Mammary epithelial cell (primary cell): ENCODE measurements at regions of chr2 and their contacts with region 1.

Region 1: DNA sequence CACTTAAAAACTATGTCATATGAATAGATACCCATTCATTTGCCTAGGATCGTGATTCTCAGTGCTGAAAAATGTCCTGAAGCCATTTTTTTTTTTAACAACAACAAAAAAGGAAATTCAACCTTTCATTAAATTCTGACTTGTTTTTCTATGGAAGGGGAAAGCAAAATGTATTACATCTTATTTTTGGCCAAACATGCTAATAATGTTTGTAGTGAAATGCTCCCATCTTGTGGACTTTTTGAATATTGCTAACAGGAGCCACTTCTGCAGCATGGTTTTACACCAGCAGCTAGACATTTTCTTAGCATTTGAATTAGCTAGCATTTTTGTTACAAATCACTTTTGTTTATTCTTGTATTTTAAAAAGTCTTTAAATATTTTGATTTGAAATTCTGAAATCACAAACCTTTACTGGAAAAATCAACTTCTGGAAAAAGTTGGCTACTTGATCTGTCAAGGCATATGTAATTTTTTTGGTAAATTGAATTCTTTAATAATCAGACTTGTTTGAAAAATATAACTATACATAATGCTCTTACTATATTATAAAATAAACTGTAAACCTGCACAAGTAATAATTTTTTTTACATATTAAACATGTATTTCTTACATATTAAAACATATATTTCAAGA is 75.8 kb downstream of the KIDINS220 start:
- DNase-seq: peak; percentile 7
- H3K4me3 ChIP-seq: no peak overlapping the region
- H3K27ac ChIP-seq: no peak overlapping the region
- H3K4me1 ChIP-seq: no peaks in the 10 kb centered on the region
- H3K27me3 ChIP-seq: no peaks in the 10 kb centered on the region
- CTCF ChIP-seq: peak; percentile 44 to 53

Region 2: DNA sequence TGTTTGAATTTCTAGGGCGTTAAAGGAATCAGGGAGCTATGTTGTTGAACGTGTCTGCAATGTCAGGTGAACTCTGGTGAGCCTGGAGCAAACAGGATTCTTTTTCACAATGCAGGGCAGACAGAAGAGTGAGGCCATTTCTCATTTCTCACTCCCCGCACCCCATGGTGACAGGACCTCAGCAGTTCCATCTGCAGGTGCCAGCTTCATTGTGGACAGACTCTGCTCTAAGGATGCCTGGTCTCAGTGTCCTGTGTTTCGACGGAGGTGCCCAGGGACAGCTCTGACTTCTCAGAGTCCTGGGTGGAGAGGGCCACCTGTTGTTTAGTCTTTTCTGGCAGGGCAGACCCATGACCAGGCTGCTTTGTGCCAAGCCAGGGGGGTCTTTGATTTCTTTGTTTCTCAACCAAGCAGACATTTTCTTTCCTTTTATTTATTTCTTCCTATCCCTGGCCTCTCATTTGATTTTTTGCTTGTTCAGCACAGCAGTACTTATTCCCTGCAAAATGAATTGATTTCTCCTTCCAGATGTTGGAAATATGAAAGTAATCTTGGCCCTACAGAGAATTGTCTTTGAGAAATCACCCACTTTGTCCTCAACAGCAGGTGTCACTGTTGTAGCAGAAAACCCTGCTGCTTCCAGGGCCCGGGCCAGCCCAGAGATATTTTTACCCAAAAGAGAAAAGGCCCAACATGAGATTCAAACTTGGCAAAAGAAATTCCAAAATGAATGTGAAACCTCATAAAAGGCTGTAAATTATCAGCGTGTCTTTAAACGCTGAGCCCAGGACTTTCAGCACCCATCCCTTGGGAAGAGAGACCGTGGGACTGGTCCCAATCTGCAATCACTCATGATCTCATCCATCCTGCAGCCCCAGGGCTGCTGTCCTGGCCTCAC is 1642.8 kb before region 1 on chr2:
- CTCF ChIA-PET with region 1: no interaction called
- dilution Hi-C with region 1: no loop called
- in situ Hi-C with region 1: no loop called
- intact Hi-C with region 1: loop called (anchors 1 kb)
- DNase-seq: peak; percentile 11
- H3K4me3 ChIP-seq: no peak overlapping the region
- H3K27ac ChIP-seq: no peak overlapping the region
- H3K4me1 ChIP-seq: no peaks in the 10 kb centered on the region
- H3K27me3 ChIP-seq: no peaks in the 10 kb centered on the region
- CTCF ChIP-seq: peak; percentile 66 to 67

Region 3: GRCh38 chr2:7427293-7428060 is 1334.2 kb before region 1 on chr2:
- CTCF ChIA-PET with region 1: no interaction called
- dilution Hi-C with region 1: no loop called
- in situ Hi-C with region 1: no loop called
- intact Hi-C with region 1: loop called (anchors 2 kb)
- DNase-seq: peak; percentile 37
- H3K4me3 ChIP-seq: no peak overlapping the region
- H3K27ac ChIP-seq: no peak overlapping the region
- H3K4me1 ChIP-seq: peaks cover 8% of the 10 kb centered on the region
- H3K27me3 ChIP-seq: peaks cover 2% of the 10 kb centered on the region
- CTCF ChIP-seq: peak; percentile 61 to 66

Region 4: GRCh38 chr2:8551622-8552074 is 210.0 kb before region 1 on chr2:
- CTCF ChIA-PET with region 1: no interaction called
- dilution Hi-C with region 1: no loop called
- in situ Hi-C with region 1: no loop called
- intact Hi-C with region 1: no loop called
- DNase-seq: no peak
- H3K4me3 ChIP-seq: no peak overlapping the region
- H3K27ac ChIP-seq: no peak overlapping the region
- H3K4me1 ChIP-seq: no peaks in the 10 kb centered on the region
- H3K27me3 ChIP-seq: no peaks in the 10 kb centered on the region
- CTCF ChIP-seq: no peak

Region 5: DNA sequence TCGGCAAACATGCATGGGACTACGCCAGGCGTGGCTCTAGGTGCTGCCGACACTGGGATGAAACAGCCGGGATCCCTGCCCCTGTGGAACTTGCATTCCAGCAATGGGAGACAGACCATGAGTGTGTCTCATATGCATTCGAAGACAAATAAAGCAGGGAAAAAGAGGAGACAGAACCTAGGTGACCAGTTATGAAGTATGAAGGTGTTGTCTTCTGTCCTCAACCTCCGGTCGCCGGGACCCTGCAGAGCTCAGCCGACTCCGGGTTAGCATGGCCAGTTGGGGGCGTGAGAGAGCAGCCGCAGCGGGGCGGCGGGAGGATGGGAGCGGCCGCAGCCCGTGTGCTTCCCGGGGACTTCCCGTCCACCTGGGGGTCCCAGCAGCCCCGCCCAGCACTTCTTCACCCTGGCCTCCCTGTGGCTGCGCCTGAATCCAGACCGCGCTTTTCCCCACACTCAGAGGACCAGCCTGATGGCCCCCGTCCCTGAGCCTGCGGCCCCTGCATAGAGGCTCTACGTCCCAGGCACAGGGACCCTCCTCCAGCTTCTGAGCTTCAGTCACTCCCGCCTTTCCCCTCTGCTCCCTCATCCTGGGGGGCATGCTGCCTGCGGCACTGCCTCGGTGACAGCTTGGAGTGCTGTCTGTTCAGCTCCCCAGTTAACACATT is 68.4 kb before region 1 on chr2:
- CTCF ChIA-PET with region 1: no interaction called
- dilution Hi-C with region 1: no loop called
- in situ Hi-C with region 1: no loop called
- intact Hi-C with region 1: loop called (anchors 1 kb)
- DNase-seq: peak; percentile 28
- H3K4me3 ChIP-seq: peak overlapping the region; percentile 29 to 38 (median 38)
- H3K27ac ChIP-seq: no peak overlapping the region
- H3K4me1 ChIP-seq: peaks cover 11% of the 10 kb centered on the region
- H3K27me3 ChIP-seq: no peaks in the 10 kb centered on the region
- CTCF ChIP-seq: peak; percentile 43 to 82

Region 6: DNA sequence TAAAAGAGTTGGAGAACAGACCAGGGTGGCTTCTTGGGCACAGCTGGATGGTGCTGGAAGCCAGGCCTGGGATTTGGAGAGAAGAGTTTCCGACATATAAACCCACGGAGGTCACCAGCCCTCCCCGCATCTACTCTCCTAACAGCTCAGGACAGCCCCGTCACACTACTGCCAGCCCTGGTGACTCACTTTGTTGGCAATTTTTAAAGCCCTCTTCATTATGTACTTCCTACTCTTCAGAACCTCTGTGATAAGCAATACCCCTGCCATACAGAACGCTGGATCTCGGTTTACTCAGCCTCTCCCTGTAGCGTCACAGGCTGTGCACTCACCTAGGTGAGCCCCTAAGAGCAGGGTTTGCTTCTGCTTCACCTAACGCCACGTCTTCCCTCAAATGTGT is 31.7 kb before region 1 on chr2:
- CTCF ChIA-PET with region 1: no interaction called
- dilution Hi-C with region 1: no loop called
- in situ Hi-C with region 1: no loop called
- intact Hi-C with region 1: no loop called
- DNase-seq: no peak
- H3K4me3 ChIP-seq: no peak overlapping the region
- H3K27ac ChIP-seq: no peak overlapping the region
- H3K4me1 ChIP-seq: no peaks in the 10 kb centered on the region
- H3K27me3 ChIP-seq: no peaks in the 10 kb centered on the region
- CTCF ChIP-seq: no peak

Region 7: GRCh38 chr2:8790739-8791162 is 29.1 kb after region 1 on chr2:
- CTCF ChIA-PET with region 1: no interaction called
- dilution Hi-C with region 1: no loop called
- in situ Hi-C with region 1: no loop called
- intact Hi-C with region 1: no loop called
- DNase-seq: no peak
- H3K4me3 ChIP-seq: no peak overlapping the region
- H3K27ac ChIP-seq: no peak overlapping the region
- H3K4me1 ChIP-seq: no peaks in the 10 kb centered on the region
- H3K27me3 ChIP-seq: no peaks in the 10 kb centered on the region
- CTCF ChIP-seq: no peak